ENCODE measurements at regions of chr7 and their contacts with region 1.

Region 1: GRCh38 chr7:5665094-5666025 is 116.1 kb downstream of the RNF216 start:
- DNase-seq: no peak

Region 2: DNA sequence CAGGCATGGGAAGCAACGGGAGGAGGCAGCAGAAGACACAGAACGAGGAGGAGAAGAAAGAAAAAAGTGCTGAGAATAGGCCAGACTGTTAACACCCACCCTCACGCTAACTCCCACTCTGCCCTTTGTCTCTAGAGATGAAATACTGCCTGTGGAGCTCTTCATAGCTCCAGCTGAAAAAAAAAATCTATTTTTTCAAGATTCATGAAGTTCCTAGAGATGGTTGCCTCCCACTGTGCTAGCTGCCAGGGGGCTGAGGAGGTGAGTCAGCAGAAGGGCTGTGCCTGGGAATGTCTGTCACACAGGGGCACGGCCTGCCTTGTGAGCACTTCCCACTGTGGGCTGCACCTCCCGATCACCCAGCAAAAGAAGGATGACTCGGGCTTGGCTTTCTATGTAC is 28.4 kb before region 1 on chr7:
- intact Hi-C with region 1: no loop called
- DNase-seq: peak; percentile 80

Region 3: DNA sequence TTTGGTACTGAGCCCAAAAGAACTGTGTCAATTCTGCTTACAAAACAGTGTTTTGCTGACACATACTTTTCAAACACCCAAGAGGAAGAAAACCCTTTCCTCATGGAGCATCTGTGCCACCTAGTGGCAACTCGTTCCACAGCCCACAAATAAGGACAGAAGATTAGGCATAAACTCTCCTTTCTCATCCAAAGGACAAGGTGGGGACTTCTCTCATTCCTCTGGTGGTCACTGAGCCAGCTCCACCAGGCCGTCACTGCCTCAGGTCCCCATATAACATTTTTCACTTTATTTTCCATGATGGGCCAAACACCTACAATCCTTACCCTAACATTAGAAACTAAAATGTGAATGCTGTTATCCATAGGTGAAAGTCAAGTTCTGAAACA is 39.2 kb after region 1 on chr7:
- intact Hi-C with region 1: loop called (anchors 5 kb)
- DNase-seq: peak; percentile 83

Measured in cardiac septum (tissue), 1 donor.